ENCODE measurements at regions of chrX and their contacts with region 1.

Region 1: GRCh38 chrX:114626323-114626722 is 42.4 kb downstream of the HTR2C start:
- DNase-seq: peak; percentile 5
- H3K4me3 ChIP-seq: no peak overlapping the region
- H3K27ac ChIP-seq: no peak overlapping the region
- H3K4me1 ChIP-seq: no peaks in the 10 kb centered on the region
- H3K27me3 ChIP-seq: no peaks in the 10 kb centered on the region
- CTCF ChIP-seq: peak; percentile 51 to 65

Region 2: DNA sequence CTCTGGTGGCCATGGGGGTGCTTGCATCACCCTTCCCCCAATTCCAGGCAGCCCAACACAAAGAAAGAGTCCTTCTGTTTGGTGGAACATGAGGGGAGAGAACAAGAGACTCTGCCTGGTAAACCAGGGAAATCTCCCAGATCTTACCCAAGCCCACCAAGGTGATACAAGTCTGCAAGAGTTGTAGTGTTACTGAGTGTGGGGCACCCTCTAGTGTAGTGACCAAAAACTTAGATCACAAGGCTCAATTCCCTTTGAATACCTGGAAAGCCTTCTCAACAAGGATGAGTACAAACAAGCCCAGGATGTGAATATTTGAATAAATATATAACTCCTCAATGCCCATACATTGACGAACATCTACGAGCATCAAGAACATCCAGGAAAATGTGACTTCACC is 326.4 kb after region 1 on chrX:
- CTCF ChIA-PET with region 1: interaction called, 5 read pairs
- dilution Hi-C with region 1: no loop called
- in situ Hi-C with region 1: loop called in 1 of 2 experiments (anchors 10 kb)
- intact Hi-C with region 1: loop called (anchors 1 kb)
- DNase-seq: no peak
- H3K4me3 ChIP-seq: no peak overlapping the region
- H3K27ac ChIP-seq: no peak overlapping the region
- H3K4me1 ChIP-seq: no peaks in the 10 kb centered on the region
- H3K27me3 ChIP-seq: no peaks in the 10 kb centered on the region
- CTCF ChIP-seq: peak in 1 of 2 donors; percentile 19

Region 3: GRCh38 chrX:115147220-115147619 is 520.9 kb after region 1 on chrX:
- CTCF ChIA-PET with region 1: interaction called, 6 read pairs
- dilution Hi-C with region 1: no loop called
- in situ Hi-C with region 1: loop called (anchors 25 kb)
- intact Hi-C with region 1: loop called (anchors 1 kb)
- DNase-seq: peak; percentile 4
- H3K4me3 ChIP-seq: no peak overlapping the region
- H3K27ac ChIP-seq: no peak overlapping the region
- H3K4me1 ChIP-seq: no peaks in the 10 kb centered on the region
- H3K27me3 ChIP-seq: peaks cover 3% of the 10 kb centered on the region
- CTCF ChIP-seq: peak; percentile 47 to 57